ENCODE measurements at regions of chr6 and their contacts with region 1.

Region 1: DNA sequence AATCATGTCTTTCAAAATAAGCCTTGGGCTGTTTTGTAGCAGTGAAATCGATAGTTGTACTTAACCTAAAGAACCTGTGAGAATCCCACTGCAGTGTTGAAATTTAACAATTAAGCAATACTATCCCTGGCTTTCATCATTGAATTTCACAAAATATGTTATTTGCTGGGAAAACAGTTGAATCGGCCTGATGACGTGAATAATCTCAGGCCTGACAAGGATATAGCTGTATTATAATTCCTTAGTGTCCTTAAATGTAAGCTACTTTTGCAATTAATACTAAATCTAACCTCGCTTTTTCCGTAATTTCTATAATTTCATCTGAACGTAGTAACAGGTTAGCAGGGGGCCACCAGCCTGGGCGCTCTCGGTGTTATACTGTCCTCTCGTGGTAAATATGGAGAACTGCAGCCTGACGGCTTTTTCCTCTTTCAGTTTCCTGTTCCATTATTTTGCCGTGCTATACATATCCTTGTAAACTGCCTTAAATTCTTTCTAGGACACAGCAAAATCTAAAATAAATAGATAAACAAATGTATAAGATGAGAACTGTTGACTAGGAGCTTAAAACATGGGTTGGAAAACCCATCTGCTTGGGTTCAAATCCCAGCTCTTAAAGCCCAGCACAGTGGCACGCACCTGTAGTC is 24.0 kb downstream of the MTFR2 start:
- DNase-seq: peak; percentile 19 to 75 (median 60)
- ATAC-seq: peak; percentile 95
- H3K4me3 ChIP-seq: peak overlapping the region in 1 of 2 experiments; percentile 21
- H3K4me3 Mint-ChIP-seq: peak overlapping the region; percentile 56
- H3K27ac ChIP-seq: no peak overlapping the region
- H3K27ac Mint-ChIP-seq: no peak overlapping the region
- H3K4me1 ChIP-seq: no peaks in the 10 kb centered on the region
- H3K4me1 Mint-ChIP-seq: peaks cover 3% of the 10 kb centered on the region
- H3K27me3 ChIP-seq: no peaks in the 10 kb centered on the region
- H3K27me3 Mint-ChIP-seq: no peaks in the 10 kb centered on the region
- CTCF ChIP-seq: peak; percentile 100

Region 2: GRCh38 chr6:135451693-135452092 is 774.5 kb before region 1 on chr6:
- CTCF ChIA-PET with region 1: interaction called, 22 read pairs
- POLR2A ChIA-PET with region 1: no interaction called
- intact Hi-C with region 1: loop called (anchors 1 kb)
- DNase-seq: peak in 2 of 9 experiments; percentile 55 to 63
- ATAC-seq: peak; percentile 52
- H3K4me3 ChIP-seq: no peak overlapping the region
- H3K4me3 Mint-ChIP-seq: no peak overlapping the region
- H3K27ac ChIP-seq: no peak overlapping the region
- H3K27ac Mint-ChIP-seq: no peak overlapping the region
- H3K4me1 ChIP-seq: no peaks in the 10 kb centered on the region
- H3K4me1 Mint-ChIP-seq: no peaks in the 10 kb centered on the region
- H3K27me3 ChIP-seq: no peaks in the 10 kb centered on the region
- H3K27me3 Mint-ChIP-seq: no peaks in the 10 kb centered on the region
- CTCF ChIP-seq: peak; percentile 94

Region 3: GRCh38 chr6:135506270-135506997 is 719.7 kb before region 1 on chr6:
- CTCF ChIA-PET with region 1: interaction called, 36 read pairs
- POLR2A ChIA-PET with region 1: no interaction called
- intact Hi-C with region 1: loop called (anchors 1 kb)
- DNase-seq: peak in 3 of 9 experiments; percentile 7 to 76 (median 65)
- ATAC-seq: peak; percentile 82
- H3K4me3 ChIP-seq: no peak overlapping the region
- H3K4me3 Mint-ChIP-seq: peak overlapping the region; percentile 13
- H3K27ac ChIP-seq: peak overlapping the region in 1 of 2 experiments; percentile 30
- H3K27ac Mint-ChIP-seq: no peak overlapping the region
- H3K4me1 ChIP-seq: no peaks in the 10 kb centered on the region
- H3K4me1 Mint-ChIP-seq: peaks cover 4% of the 10 kb centered on the region
- H3K27me3 ChIP-seq: no peaks in the 10 kb centered on the region
- H3K27me3 Mint-ChIP-seq: no peaks in the 10 kb centered on the region
- CTCF ChIP-seq: peak; percentile 63

Region 4: GRCh38 chr6:135675862-135676261 is 550.3 kb before region 1 on chr6:
- CTCF ChIA-PET with region 1: interaction called, 64 read pairs
- POLR2A ChIA-PET with region 1: no interaction called
- intact Hi-C with region 1: loop called (anchors 1 kb)
- DNase-seq: peak in 7 of 9 experiments; percentile 4 to 75 (median 38)
- ATAC-seq: peak; percentile 75
- H3K4me3 ChIP-seq: no peak overlapping the region
- H3K4me3 Mint-ChIP-seq: no peak overlapping the region
- H3K27ac ChIP-seq: no peak overlapping the region
- H3K27ac Mint-ChIP-seq: no peak overlapping the region
- H3K4me1 ChIP-seq: no peaks in the 10 kb centered on the region
- H3K4me1 Mint-ChIP-seq: no peaks in the 10 kb centered on the region
- H3K27me3 ChIP-seq: no peaks in the 10 kb centered on the region
- H3K27me3 Mint-ChIP-seq: no peaks in the 10 kb centered on the region
- CTCF ChIP-seq: peak; percentile 72

Region 5: GRCh38 chr6:136031982-136032381 is 194.2 kb before region 1 on chr6:
- CTCF ChIA-PET with region 1: no interaction called
- POLR2A ChIA-PET with region 1: no interaction called
- intact Hi-C with region 1: loop called (anchors 1 to 5 kb)
- DNase-seq: peak in 2 of 9 experiments; percentile 6 to 16
- ATAC-seq: no peak
- H3K4me3 ChIP-seq: no peak overlapping the region
- H3K4me3 Mint-ChIP-seq: no peak overlapping the region
- H3K27ac ChIP-seq: no peak overlapping the region
- H3K27ac Mint-ChIP-seq: no peak overlapping the region
- H3K4me1 ChIP-seq: no peaks in the 10 kb centered on the region
- H3K4me1 Mint-ChIP-seq: no peaks in the 10 kb centered on the region
- H3K27me3 ChIP-seq: no peaks in the 10 kb centered on the region
- H3K27me3 Mint-ChIP-seq: no peaks in the 10 kb centered on the region
- CTCF ChIP-seq: peak; percentile 12

Region 6: GRCh38 chr6:136249811-136250685 is 23.9 kb after region 1 on chr6 and contains the start of gene MTFR2:
- CTCF ChIA-PET with region 1: interaction called, 12 read pairs
- POLR2A ChIA-PET with region 1: no interaction called
- intact Hi-C with region 1: no loop called
- DNase-seq: peak; percentile 85 to 99 (median 92)
- ATAC-seq: peak; percentile 97
- H3K4me3 ChIP-seq: peak within 1 kb of the TSS; percentile 57 to 74
- H3K4me3 Mint-ChIP-seq: peak within 1 kb of the TSS; percentile 97
- H3K27ac ChIP-seq: peak within 1 kb of the TSS in 1 of 2 experiments; percentile 17
- H3K27ac Mint-ChIP-seq: peak within 1 kb of the TSS; percentile 71
- H3K4me1 ChIP-seq: peaks cover 11% of the 10 kb centered on the region
- H3K4me1 Mint-ChIP-seq: peaks cover 36% of the 10 kb centered on the region
- H3K27me3 ChIP-seq: no peaks in the 10 kb centered on the region
- H3K27me3 Mint-ChIP-seq: no peaks in the 10 kb centered on the region
- CTCF ChIP-seq: no peak
- total RNA-seq, gene MTFR2: 1.3 to 1.5 TPM